ENCODE measurements at regions of chr14 and their contacts with region 1.

Region 1: GRCh38 chr14:75654127-75654732 is 6.4 kb downstream of the ERG28 start:
- DNase-seq: peak; percentile 87
- ATAC-seq: peak; percentile 88
- H3K4me3 Mint-ChIP-seq: no peak overlapping the region
- H3K27ac Mint-ChIP-seq: no peak overlapping the region
- H3K4me1 Mint-ChIP-seq: peaks cover 9% of the 10 kb centered on the region
- H3K27me3 Mint-ChIP-seq: no peaks in the 10 kb centered on the region

Region 2: GRCh38 chr14:75307700-75308379 is 346.4 kb before region 1 on chr14:
- CTCF ChIA-PET with region 1: interaction called, 12 read pairs
- POLR2A ChIA-PET with region 1: no interaction called
- DNase-seq: peak; percentile 81
- ATAC-seq: peak; percentile 80
- H3K4me3 Mint-ChIP-seq: no peak overlapping the region
- H3K27ac Mint-ChIP-seq: no peak overlapping the region
- H3K4me1 Mint-ChIP-seq: peaks cover 26% of the 10 kb centered on the region
- H3K27me3 Mint-ChIP-seq: peaks cover 3% of the 10 kb centered on the region

Region 3: DNA sequence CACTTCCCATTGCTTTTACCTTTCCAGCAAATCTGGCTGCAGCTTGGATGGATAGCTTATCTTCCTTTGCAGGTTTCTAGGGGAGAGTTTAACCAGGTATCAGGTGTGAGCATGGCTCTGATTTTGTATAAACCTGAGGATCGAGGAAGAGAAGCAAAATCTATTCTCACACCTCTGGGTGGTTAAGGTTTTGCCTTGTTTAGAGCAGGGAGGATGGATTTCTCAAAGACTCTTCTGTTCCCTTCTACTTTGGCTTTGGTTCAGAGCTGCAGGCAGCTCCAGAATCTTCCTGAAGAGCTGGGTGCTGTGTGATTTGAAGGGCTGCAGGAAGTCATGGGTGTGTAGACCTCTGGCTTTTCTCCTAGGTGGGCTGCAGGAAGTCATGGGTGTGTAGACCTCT is 224.7 kb before region 1 on chr14:
- CTCF ChIA-PET with region 1: no interaction called
- POLR2A ChIA-PET with region 1: no interaction called
- DNase-seq: no peak
- ATAC-seq: no peak
- H3K4me3 Mint-ChIP-seq: peak overlapping the region; percentile 67
- H3K27ac Mint-ChIP-seq: no peak overlapping the region
- H3K4me1 Mint-ChIP-seq: peaks cover 17% of the 10 kb centered on the region
- H3K27me3 Mint-ChIP-seq: peaks cover 29% of the 10 kb centered on the region

Region 4: GRCh38 chr14:75522224-75522982 is 131.8 kb before region 1 on chr14 and contains the start of gene BATF:
- CTCF ChIA-PET with region 1: interaction called, 20 read pairs
- POLR2A ChIA-PET with region 1: no interaction called
- DNase-seq: peak; percentile 87
- ATAC-seq: peak; percentile 84
- H3K4me3 Mint-ChIP-seq: peak within 1 kb of the TSS; percentile 100
- H3K27ac Mint-ChIP-seq: peak within 1 kb of the TSS; percentile 99
- H3K4me1 Mint-ChIP-seq: peaks cover 63% of the 10 kb centered on the region
- H3K27me3 Mint-ChIP-seq: no peaks in the 10 kb centered on the region
- total RNA-seq, gene BATF: 41.3 to 41.6 TPM

Region 5: GRCh38 chr14:75566321-75566720 is 87.9 kb before region 1 on chr14:
- CTCF ChIA-PET with region 1: interaction called, 19 read pairs
- POLR2A ChIA-PET with region 1: no interaction called
- DNase-seq: peak; percentile 78
- ATAC-seq: peak; percentile 95
- H3K4me3 Mint-ChIP-seq: no peak overlapping the region
- H3K27ac Mint-ChIP-seq: peak overlapping the region; percentile 48
- H3K4me1 Mint-ChIP-seq: peaks cover 49% of the 10 kb centered on the region
- H3K27me3 Mint-ChIP-seq: no peaks in the 10 kb centered on the region

Region 6: DNA sequence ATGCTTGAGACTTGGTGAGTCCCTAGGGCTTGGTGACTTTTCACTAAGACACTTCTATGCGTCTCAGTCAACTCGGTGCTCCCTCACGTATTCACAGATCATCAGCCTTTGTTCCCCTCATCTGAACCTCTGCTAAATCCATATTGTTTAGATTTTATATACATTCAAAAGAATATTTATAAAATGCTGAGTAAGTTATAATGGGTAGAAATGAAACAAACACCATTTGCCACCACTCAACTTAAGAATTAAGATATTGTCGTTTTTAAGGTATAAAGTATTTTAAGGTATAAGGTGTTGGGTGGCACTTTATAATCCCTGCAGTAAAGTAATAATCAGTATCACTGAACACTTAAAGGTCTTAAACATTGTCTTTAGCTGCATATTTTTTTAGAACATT is 109.8 kb after region 1 on chr14:
- CTCF ChIA-PET with region 1: no interaction called
- POLR2A ChIA-PET with region 1: no interaction called
- DNase-seq: no peak
- ATAC-seq: no peak
- H3K4me3 Mint-ChIP-seq: no peak overlapping the region
- H3K27ac Mint-ChIP-seq: no peak overlapping the region
- H3K4me1 Mint-ChIP-seq: no peaks in the 10 kb centered on the region
- H3K27me3 Mint-ChIP-seq: no peaks in the 10 kb centered on the region